ENCODE measurements at regions of chr1 and their contacts with region 1.

Region 1: DNA sequence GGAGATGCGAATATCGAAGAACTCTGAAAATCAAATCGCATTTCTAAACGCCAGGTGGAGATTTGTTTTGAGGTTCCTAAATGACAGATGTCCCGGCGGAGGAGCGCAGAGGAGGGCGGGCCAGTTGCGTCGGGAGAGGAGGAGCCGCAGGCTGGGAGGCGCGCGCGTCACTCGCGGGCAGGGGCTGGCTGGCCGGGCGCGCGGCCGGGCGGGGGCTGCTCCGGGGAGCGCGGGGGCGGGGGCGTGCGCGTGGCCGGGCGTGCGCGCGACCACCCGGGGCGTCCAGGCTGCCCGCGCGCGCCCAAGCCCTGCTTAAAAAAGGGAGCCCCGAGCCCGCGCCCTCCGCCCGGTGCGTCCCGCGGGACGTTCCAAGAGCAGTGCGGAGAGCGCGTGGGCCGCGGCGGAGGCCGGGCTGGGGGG is 47.3 kb downstream of the H3-3A start:
- DNase-seq: peak; percentile 70 to 91
- H3K4me3 ChIP-seq: peak overlapping the region; percentile 82
- H3K27ac ChIP-seq: peak overlapping the region; percentile 67
- H3K4me1 ChIP-seq: peaks cover 31% of the 10 kb centered on the region
- H3K27me3 ChIP-seq: no peaks in the 10 kb centered on the region
- CTCF ChIP-seq: no peak

Region 2: GRCh38 chr1:225999227-225999911 is 110.5 kb before region 1 on chr1 and contains the start of gene SDE2:
- CTCF ChIA-PET with region 1: no interaction called
- POLR2A ChIA-PET with region 1: interaction called, 3 read pairs
- intact Hi-C with region 1: loop called (anchors 5 kb)
- DNase-seq: peak; percentile 92 to 100
- H3K4me3 ChIP-seq: peak within 1 kb of the TSS; percentile 79
- H3K27ac ChIP-seq: peak within 1 kb of the TSS; percentile 67
- H3K4me1 ChIP-seq: peaks cover 27% of the 10 kb centered on the region
- H3K27me3 ChIP-seq: no peaks in the 10 kb centered on the region
- CTCF ChIP-seq: no peak
- total RNA-seq, gene SDE2: 16.0 and 17.3 TPM in 2 replicates

Region 3: DNA sequence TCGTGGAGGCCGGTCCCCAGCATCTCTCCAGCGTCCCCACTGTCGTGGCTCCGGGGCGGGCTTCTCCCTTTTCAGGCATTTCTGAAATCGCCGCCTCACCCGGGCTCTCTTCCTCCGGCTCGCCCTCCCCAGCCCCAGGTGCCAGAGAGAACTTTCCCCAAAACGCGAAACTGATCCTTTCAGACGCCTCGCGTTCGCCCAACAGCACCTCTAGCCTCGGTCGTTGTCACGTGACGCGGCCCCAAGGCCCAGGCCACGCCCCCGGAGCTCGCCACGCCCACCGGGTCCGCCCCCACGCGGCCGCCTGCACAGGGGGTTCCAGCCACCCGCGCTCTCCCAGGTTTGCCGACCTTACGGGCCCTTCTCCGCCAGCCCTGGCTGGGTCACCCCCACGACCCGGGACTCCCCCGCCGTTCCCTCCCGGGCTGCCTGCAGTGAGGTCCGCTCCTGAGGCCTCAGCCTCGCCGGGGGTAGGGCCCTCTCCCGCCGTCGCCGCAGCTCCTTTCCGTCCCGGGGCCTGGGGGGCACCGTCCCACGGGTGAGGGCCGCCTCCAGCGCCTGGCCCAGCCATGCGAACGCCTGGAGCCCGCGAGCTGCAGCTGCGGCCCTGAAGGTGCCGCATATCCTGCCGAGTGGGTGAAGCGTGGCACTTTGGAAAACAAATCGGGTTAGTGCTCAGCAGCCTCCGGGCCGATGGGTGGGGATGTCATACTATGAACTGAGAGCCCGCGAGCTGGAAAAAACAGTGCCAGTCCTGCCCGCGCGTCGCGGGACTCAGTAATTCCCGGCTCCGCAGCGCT is 26.3 kb before region 1 on chr1:
- CTCF ChIA-PET with region 1: interaction called, 4 read pairs
- POLR2A ChIA-PET with region 1: no interaction called
- intact Hi-C with region 1: loop called (anchors 2 kb)
- DNase-seq: peak; percentile 68 to 96
- H3K4me3 ChIP-seq: peak overlapping the region; percentile 91
- H3K27ac ChIP-seq: peak overlapping the region; percentile 47
- H3K4me1 ChIP-seq: peaks cover 6% of the 10 kb centered on the region; the same call in 1 of the 2 replicates
- H3K27me3 ChIP-seq: no peaks in the 10 kb centered on the region
- CTCF ChIP-seq: no peak; the same call in 1 of the 2 replicates